Cardiac septum (tissue), 1 donor: ENCODE measurements at regions of chr14 and their contacts with region 1.

Region 1: GRCh38 chr14:101761032-101761880 is at the start of gene PPP2R5C:
- DNase-seq: peak; percentile 97
- total RNA-seq, gene PPP2R5C: 202 TPM

Region 2: DNA sequence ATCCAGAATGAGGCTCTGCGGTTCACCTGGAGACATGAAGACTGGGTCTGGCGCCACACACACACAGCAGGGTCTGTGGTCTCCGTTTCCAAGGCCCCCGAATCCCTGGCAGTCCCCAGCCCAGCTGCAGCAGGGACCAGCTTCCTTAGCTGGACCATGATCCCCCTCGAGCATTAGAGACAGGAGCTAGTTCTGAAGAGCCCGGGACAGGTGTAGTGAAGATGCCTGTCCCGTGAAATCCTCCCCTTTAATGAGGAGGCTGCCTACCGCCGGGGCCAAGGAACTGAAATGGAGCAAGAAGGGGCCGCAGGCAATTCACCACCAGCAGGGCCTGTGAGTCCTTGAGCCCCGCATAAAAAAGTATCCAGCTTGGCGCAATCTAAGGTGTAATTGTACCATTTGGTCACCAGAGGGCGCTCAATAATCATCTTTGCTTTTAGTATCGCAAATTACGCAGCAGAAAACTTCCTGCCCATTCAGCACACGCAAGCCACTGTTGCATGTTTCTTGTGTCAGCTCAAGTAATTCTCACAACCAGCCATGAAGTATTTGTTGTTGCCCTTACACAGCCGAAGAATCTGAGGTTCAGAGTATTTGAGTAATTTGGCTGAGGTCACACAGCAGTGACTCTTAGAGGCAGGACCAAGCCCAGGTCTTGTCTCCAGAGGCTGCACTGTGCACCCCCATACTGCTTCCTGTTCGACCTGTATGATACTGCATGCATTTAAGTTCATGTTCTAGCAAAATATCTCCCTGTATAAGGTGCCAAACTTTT is 54.0 kb before region 1 on chr14:
- intact Hi-C with region 1: loop called (anchors 5 kb)
- DNase-seq: no peak

Region 3: GRCh38 chr14:101964297-101965144 is 203.3 kb after region 1 on chr14 and contains the start of gene DYNC1H1:
- intact Hi-C with region 1: loop called (anchors 5 kb)
- DNase-seq: peak; percentile 96
- total RNA-seq, gene DYNC1H1: 575 TPM